ENCODE measurements at regions of chr20 and their contacts with region 1.

Region 1: DNA sequence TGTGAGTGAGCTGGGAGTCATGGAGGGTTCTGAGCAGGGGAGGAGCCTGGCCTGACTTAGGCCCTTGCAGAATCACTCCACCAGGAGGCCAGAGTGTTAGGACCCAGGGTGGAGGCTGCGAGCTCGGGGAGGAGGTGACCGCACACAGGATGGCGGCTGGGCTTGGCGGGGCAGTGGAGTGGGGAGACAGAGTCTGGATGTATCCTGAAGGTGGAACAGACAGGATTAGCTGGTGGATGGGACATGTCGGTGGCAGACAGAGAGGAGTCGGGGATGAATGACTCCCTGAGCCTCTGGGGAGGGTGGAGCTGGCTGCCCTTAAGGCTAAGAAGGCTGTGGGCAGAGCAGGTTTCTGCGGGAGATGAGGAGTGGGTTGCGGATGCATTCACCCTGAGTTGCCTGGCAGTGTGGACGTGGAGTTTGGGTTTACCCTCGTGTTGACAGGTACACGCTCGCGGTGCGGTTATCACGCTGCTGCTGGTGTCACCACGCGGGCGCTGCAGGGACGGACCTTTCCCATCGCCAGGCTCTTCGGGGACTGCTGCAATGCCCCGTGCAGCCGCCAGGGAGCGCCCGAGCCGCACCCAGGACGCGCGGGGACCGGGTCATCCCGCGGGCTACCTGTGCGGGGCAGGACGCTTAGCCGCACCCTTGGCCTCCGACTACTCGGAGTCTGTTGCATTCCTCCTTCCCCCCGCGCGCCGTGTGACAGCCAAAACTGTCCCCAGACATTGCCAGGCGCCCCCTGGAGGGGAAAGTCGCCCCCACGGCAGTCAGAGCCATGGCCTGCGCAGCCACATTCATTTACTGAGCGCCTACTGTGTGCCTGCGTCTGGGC is 43.0 kb upstream of the PTGIS start:
- DNase-seq: peak; percentile 55 to 96 (median 81)

Region 2: DNA sequence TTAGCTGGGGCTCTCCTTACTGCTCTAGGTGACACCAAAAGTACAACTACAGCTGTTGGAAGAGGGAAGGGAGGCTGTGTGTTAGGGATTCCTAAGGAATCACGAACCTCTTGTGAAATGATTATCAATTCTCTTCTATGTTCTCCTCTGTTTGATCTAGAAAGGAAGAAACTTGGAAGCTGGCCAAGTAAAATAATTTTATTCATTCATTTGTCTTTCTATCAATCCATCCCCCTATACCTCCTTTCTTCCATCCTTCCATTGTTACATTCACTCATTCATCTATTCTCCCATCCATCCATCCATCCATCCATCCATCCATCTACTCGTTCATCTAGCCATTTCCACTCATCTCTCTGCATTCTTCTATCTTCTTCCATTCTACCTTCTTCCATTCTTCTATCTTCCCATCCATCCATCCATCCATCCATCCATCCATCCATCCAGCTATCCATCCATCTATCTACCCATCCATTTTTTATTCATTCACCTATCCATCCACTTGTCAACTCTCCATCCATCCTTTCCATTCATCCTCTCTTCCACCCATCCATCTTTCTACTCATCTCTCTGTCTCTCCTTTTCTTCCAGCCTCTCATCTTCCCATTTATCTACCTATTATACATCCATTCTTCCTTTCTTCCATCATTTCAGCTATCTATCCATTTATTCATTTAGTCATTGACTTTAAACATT is 280.2 kb before region 1 on chr20:
- intact Hi-C with region 1: loop called (anchors 5 kb)
- DNase-seq: no peak

Region 3: DNA sequence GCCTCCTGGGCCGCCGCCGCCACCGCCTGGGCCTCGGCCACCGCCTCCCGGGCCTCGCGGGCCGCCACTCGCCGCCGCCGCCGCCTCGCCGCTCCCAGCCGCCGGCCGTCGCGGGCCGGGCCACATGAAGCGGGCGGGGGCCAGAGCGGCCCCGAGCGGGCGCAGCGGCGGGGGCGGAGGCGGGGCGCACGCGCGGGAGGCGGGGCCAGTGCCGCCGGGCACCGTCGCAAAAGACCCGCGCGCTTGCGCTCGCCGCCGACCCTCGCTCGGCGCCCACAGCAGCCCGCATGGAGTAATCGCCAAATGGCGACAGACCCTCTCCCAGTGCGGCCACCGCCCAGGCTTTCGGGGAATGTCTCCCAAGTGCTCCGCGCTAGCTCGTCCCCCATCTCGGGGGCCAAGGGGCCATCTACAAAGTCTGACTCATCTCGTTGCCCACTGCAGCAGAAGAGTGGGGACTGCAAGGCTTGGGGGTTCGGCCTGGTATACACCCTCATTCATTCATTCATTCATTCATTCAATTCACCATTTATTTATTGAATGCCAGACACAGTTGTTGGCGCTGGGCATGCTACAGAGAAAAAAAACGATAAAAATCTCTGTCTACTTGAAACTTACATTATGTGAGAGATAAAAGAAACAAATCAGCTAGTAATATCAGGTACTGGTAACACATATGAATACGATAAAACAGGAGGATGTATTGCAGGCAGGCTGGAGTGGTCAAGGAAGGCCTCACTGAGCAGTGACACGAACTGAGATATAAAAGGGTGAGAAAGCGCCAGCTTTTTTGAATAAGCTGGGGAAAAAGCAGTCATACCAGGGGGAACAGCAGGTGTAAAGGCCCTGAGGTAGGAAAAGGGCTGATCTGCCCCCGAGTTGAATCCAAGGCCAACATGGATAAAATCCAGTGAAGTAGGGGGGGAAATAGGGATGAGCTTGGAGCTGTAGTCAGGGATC is 103.1 kb after region 1 on chr20 and contains the start of gene B4GALT5:
- intact Hi-C with region 1: loop called (anchors 5 kb)
- DNase-seq: peak; percentile 67 to 97 (median 84)

Region 4: GRCh38 chr20:49846206-49846807 is 235.4 kb after region 1 on chr20:
- intact Hi-C with region 1: loop called (anchors 2 kb)
- DNase-seq: peak in 1 of 10 donors; percentile 54

Region 5: DNA sequence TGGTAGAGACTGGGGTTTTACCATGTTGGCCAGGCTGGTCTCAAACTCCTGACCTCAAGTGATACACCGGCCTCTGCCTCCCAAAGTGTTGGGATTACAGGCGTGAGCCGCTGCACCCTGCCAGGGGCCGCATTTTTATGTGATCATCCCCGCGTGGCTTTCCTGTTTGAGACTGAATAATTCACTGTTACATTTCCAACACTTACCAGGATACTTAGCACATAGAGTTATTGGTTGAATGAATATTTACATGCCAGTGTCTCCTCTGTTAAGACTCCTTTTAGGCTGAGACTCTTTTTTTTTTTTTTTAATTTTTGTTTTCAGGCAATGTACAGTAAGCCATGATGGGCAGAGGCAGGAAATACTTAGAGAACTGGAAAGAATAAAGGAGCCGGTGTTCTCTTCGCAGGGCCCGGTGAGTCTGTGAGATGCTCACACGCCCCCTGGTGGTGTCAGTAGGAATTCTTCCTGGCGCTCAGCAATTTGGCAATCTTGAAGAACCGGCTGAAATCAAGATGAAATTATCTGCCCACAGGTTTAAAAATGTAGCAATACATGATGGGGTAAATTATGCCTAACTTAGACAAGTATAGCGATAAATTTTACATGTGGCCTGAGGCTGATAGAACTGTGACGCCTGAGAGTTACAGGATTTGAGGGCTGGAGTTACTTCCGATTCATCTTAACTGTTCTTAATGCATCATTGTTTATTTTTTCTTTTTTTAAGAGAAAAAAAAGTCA is 317.7 kb after region 1 on chr20:
- intact Hi-C with region 1: loop called (anchors 2 kb)
- DNase-seq: peak; percentile 70 to 96 (median 86)

Measured in posterior cingulate gyrus (tissue), 11 donors.